Activated B cell treated with CpG ODN at 0.5 μM for 24 hours (primary cell): ENCODE measurements at regions of chr10 and their contacts with region 1.

Region 1: GRCh38 chr10:78029269-78030226 is at the start of gene POLR3A:
- DNase-seq: peak; percentile 85
- ATAC-seq: peak; percentile 57
- H3K4me3 Mint-ChIP-seq: peak within 1 kb of the TSS; percentile 99
- H3K27ac Mint-ChIP-seq: peak within 1 kb of the TSS; percentile 88
- H3K4me1 Mint-ChIP-seq: peaks cover 43% of the 10 kb centered on the region
- H3K27me3 Mint-ChIP-seq: no peaks in the 10 kb centered on the region
- CTCF ChIP-seq: no peak
- total RNA-seq, gene POLR3A: 17.0 and 20.3 TPM in 2 replicates

Region 2: GRCh38 chr10:77837240-77837924 is 192.2 kb before region 1 on chr10:
- CTCF ChIA-PET with region 1: no interaction called
- POLR2A ChIA-PET with region 1: no interaction called
- intact Hi-C with region 1: loop called (anchors 2 kb)
- DNase-seq: no peak
- ATAC-seq: peak; percentile 84
- H3K4me3 Mint-ChIP-seq: no peak overlapping the region
- H3K27ac Mint-ChIP-seq: no peak overlapping the region
- H3K4me1 Mint-ChIP-seq: peaks cover 8% of the 10 kb centered on the region
- H3K27me3 Mint-ChIP-seq: no peaks in the 10 kb centered on the region
- CTCF ChIP-seq: no peak

Region 3: GRCh38 chr10:77846718-77847630 is 182.6 kb before region 1 on chr10:
- CTCF ChIA-PET with region 1: no interaction called
- POLR2A ChIA-PET with region 1: no interaction called
- intact Hi-C with region 1: loop called (anchors 1 kb)
- DNase-seq: peak; percentile 46
- ATAC-seq: peak; percentile 65
- H3K4me3 Mint-ChIP-seq: no peak overlapping the region
- H3K27ac Mint-ChIP-seq: no peak overlapping the region
- H3K4me1 Mint-ChIP-seq: peaks cover 2% of the 10 kb centered on the region
- H3K27me3 Mint-ChIP-seq: no peaks in the 10 kb centered on the region
- CTCF ChIP-seq: peak; percentile 85

Region 4: DNA sequence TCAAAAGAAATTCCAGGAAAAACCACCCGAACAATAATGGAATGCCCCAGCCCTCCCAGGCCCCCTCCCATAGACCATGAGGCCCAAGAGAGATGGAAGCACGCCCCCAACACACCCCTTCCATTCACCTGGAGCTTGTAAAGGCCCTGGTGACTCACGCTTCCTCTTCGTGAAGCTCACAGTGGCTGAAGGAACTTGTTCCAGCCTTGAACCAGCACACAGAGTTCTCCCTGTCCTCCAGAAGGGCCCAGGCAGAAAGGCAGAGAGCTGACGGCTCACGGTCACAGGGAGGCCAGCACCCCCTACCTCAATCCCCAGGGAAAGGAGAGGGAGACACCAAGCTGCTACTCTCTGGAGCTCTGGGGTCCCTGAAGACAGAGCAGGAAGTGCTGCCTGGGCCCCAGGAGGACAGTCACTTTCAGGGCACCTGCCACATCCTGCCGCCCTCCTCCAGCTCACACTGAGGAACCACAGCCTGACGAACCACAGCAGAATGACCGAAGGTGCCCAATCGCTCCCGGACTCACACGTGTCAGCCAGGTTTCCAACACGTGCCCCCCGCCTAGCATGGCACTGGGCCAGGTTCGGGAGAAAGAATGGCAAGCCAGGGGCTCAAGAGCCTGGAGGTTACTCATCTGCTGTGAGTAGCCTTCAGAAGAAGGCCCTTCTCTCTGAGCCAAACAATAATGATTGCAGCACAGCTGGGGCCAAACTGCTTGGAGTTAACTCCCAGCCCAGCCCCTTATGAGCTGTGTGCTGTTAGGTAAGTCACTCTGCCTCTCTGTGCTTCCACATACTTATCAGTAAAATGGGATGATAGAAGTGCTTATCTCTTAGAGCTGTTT is 155.8 kb before region 1 on chr10:
- CTCF ChIA-PET with region 1: interaction called, 3 read pairs
- POLR2A ChIA-PET with region 1: interaction called, 4 read pairs
- intact Hi-C with region 1: loop called (anchors 1 kb)
- DNase-seq: peak; percentile 46
- ATAC-seq: peak; percentile 79
- H3K4me3 Mint-ChIP-seq: peak overlapping the region; percentile 49
- H3K27ac Mint-ChIP-seq: peak overlapping the region; percentile 82
- H3K4me1 Mint-ChIP-seq: peaks cover 38% of the 10 kb centered on the region
- H3K27me3 Mint-ChIP-seq: no peaks in the 10 kb centered on the region
- CTCF ChIP-seq: no peak

Region 5: GRCh38 chr10:78424719-78425118 is 395.2 kb after region 1 on chr10:
- CTCF ChIA-PET with region 1: no interaction called
- POLR2A ChIA-PET with region 1: no interaction called
- intact Hi-C with region 1: no loop called
- DNase-seq: no peak
- ATAC-seq: no peak
- H3K4me3 Mint-ChIP-seq: no peak overlapping the region
- H3K27ac Mint-ChIP-seq: no peak overlapping the region
- H3K4me1 Mint-ChIP-seq: no peaks in the 10 kb centered on the region
- H3K27me3 Mint-ChIP-seq: peaks cover 10% of the 10 kb centered on the region
- CTCF ChIP-seq: no peak

Region 6: GRCh38 chr10:78579995-78580394 is 550.4 kb after region 1 on chr10:
- CTCF ChIA-PET with region 1: no interaction called
- POLR2A ChIA-PET with region 1: no interaction called
- intact Hi-C with region 1: loop called (anchors 1 kb)
- DNase-seq: no peak
- ATAC-seq: no peak
- H3K4me3 Mint-ChIP-seq: no peak overlapping the region
- H3K27ac Mint-ChIP-seq: no peak overlapping the region
- H3K4me1 Mint-ChIP-seq: peaks cover 18% of the 10 kb centered on the region
- H3K27me3 Mint-ChIP-seq: no peaks in the 10 kb centered on the region
- CTCF ChIP-seq: no peak